PC-9 (cell line): ENCODE measurements at regions of chr1 and their contacts with region 1.

Region 1: GRCh38 chr1:77143529-77144121 is 75.6 kb downstream of the PIGK start:
- DNase-seq: peak in 1 of 2 experiments; percentile 46
- H3K4me3 ChIP-seq: no peak overlapping the region
- H3K27ac ChIP-seq: no peak overlapping the region
- H3K4me1 ChIP-seq: no peaks in the 10 kb centered on the region
- H3K27me3 ChIP-seq: no peaks in the 10 kb centered on the region
- CTCF ChIP-seq: peak; percentile 74

Region 2: GRCh38 chr1:75991497-75992114 is 1152.0 kb before region 1 on chr1:
- CTCF ChIA-PET with region 1: no interaction called
- POLR2A ChIA-PET with region 1: no interaction called
- intact Hi-C with region 1: loop called (anchors 5 kb)
- DNase-seq: peak; percentile 68 to 69
- H3K4me3 ChIP-seq: no peak overlapping the region
- H3K27ac ChIP-seq: no peak overlapping the region
- H3K4me1 ChIP-seq: no peaks in the 10 kb centered on the region
- H3K27me3 ChIP-seq: peaks cover 6% of the 10 kb centered on the region; the same call in 1 of the 2 replicates
- CTCF ChIP-seq: peak; percentile 96

Region 3: GRCh38 chr1:76330991-76331603 is 812.5 kb before region 1 on chr1:
- CTCF ChIA-PET with region 1: no interaction called
- POLR2A ChIA-PET with region 1: no interaction called
- intact Hi-C with region 1: loop called (anchors 5 kb)
- DNase-seq: peak; percentile 5 to 58
- H3K4me3 ChIP-seq: no peak overlapping the region
- H3K27ac ChIP-seq: no peak overlapping the region
- H3K4me1 ChIP-seq: no peaks in the 10 kb centered on the region
- H3K27me3 ChIP-seq: no peaks in the 10 kb centered on the region
- CTCF ChIP-seq: peak; percentile 94

Region 4: DNA sequence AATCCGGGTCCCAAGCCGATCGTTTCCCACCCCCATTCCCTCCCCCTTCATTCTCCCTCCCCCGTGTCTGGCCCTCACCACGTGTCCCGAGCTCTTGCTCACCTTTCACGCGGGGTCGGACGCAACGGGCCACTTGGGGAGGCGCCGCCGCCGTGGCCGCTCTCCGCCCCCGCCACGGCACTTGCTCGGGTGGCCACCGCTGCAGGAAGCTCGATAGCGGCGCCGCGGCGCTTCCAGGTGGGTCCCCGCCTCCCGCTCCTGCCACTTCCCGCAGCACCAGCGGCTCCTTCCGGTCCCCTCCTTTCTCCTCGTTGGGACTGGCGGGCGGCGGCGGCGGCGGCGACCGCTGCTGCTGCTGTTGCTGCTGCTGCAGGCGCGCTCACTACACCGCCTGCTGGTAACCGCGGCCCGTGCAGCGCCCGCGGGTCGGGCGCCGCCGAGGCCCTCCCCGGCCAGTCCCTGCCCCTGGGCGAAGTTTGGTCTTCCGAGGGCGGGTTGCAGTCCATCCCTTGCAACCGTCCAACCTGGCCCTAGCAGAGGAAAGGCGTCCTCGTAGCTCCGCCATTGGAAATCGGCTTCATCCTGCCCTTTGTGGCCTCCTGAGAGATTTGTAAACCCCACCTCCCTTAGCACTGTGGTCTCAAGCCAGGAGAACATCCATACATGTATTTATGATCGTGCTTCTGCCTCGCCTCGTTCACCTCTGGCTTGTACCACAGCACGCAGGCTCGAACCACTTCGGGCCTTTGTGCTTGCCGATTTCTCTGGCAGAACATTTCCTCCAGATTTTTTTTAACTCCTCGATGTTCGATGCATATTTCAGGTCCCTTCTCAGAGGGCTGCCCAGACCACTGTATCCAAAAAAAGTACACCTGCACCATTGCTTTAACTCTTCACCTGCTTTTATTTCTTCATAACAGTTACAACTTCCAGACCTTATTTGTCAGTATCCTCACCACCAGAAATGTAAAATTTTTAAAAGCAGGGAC is 539.8 kb after region 1 on chr1:
- CTCF ChIA-PET with region 1: no interaction called
- POLR2A ChIA-PET with region 1: no interaction called
- intact Hi-C with region 1: loop called (anchors 5 kb)
- DNase-seq: peak; percentile 89 to 93
- H3K4me3 ChIP-seq: peak overlapping the region; percentile 92
- H3K27ac ChIP-seq: peak overlapping the region; percentile 96
- H3K4me1 ChIP-seq: peaks cover 31% of the 10 kb centered on the region
- H3K27me3 ChIP-seq: no peaks in the 10 kb centered on the region
- CTCF ChIP-seq: peak; percentile 84

Region 5: DNA sequence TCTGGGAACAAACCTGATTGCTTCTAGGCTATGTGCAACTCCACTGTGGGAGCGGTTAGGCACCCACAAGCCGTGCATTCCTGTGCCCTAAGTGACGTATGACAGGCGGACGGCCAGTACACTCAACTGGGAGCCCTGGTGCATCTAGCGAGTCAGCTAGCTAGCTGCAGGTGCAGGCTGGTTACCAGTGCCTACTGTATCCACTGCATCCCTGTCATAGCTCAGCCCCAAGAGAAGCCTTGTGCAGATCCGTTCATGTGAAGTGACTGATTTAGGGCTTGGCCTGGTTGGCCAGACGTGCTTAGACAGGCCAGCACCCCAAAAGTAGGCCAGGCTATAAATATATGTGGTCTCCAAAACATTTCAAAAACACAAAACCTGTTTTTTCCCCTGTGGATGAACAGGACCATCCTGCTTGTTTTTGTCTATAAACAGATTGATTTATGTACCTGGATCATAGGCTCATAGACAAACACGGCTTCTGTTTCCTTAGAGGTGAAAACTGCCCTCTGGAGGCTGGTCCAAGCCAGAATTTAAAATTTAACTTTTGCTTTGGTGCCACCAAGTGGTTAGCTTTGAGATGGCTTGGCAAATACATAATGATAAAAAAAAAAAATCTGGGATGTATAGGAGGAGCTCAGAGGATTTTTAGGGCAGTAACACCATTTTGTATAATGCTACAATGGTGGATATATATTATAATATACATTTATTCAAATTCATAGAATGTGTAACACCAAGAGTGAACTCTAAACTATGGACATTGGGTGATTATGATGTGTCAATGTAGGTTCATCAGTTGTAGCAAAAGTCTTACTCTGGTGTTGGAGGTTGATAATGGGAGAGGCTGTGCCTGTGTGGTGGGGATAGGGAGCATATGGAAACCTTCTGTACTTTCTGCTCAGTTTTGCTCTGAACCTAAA is 970.7 kb after region 1 on chr1:
- CTCF ChIA-PET with region 1: no interaction called
- POLR2A ChIA-PET with region 1: no interaction called
- intact Hi-C with region 1: loop called (anchors 1 kb)
- DNase-seq: peak; percentile 64 to 72
- H3K4me3 ChIP-seq: no peak overlapping the region
- H3K27ac ChIP-seq: no peak overlapping the region
- H3K4me1 ChIP-seq: no peaks in the 10 kb centered on the region
- H3K27me3 ChIP-seq: no peaks in the 10 kb centered on the region
- CTCF ChIP-seq: peak; percentile 92